ENCODE measurements at regions of chr16 and their contacts with region 1.

Region 1: GRCh38 chr16:28616636-28617035 is 6.8 kb upstream of the SULT1A1 start:
- DNase-seq: no peak
- ATAC-seq: no peak
- H3K4me3 ChIP-seq: no peak overlapping the region
- H3K27ac ChIP-seq: no peak overlapping the region
- H3K4me1 ChIP-seq: no peaks in the 10 kb centered on the region
- CTCF ChIP-seq: no peak
- EP300 ChIP-seq: no peak
- POLR2A ChIP-seq: no peak
- RAD21 ChIP-seq: no peak

Region 2: DNA sequence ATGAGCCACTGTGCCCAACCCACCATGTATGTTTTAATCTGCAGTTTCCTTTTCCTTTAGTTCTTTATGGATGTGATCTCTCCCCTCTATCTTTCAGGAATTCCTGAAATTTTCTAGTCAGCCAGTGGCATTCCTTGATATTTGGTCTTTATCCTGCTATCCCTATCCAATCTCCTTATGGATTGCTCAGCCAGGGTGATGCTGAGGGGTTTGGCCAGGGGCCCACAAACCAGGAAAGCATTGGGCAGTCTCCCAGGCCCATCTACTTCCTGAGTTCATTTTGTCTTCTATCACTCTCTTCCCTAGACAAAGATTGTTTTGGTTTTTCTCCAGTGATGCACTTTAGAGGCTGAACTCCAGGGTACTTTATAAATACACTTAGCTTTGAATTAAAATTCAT is 950.8 kb before region 1 on chr16:
- CTCF ChIA-PET with region 1: no interaction called
- POLR2A ChIA-PET with region 1: no interaction called
- DNase-seq: no peak
- ATAC-seq: no peak
- H3K4me3 ChIP-seq: no peak overlapping the region
- H3K27ac ChIP-seq: no peak overlapping the region
- H3K4me1 ChIP-seq: no peaks in the 10 kb centered on the region
- CTCF ChIP-seq: no peak
- EP300 ChIP-seq: no peak
- POLR2A ChIP-seq: no peak
- RAD21 ChIP-seq: no peak

Region 3: GRCh38 chr16:28250999-28251398 is 365.6 kb before region 1 on chr16:
- CTCF ChIA-PET with region 1: no interaction called
- POLR2A ChIA-PET with region 1: no interaction called
- DNase-seq: no peak
- ATAC-seq: no peak
- H3K4me3 ChIP-seq: no peak overlapping the region
- H3K27ac ChIP-seq: no peak overlapping the region
- H3K4me1 ChIP-seq: no peaks in the 10 kb centered on the region
- CTCF ChIP-seq: no peak
- EP300 ChIP-seq: no peak
- POLR2A ChIP-seq: no peak
- RAD21 ChIP-seq: no peak

Region 4: GRCh38 chr16:28317040-28317880 is 299.4 kb before region 1 on chr16:
- CTCF ChIA-PET with region 1: interaction called, 12 read pairs
- POLR2A ChIA-PET with region 1: no interaction called
- DNase-seq: peak; percentile 57 to 62
- ATAC-seq: peak; percentile 48 to 80; a peak in 5 of 6 replicates
- H3K4me3 ChIP-seq: no peak overlapping the region
- H3K27ac ChIP-seq: no peak overlapping the region
- H3K4me1 ChIP-seq: no peaks in the 10 kb centered on the region
- CTCF ChIP-seq: peak; percentile 80
- EP300 ChIP-seq: no peak
- POLR2A ChIP-seq: no peak
- RAD21 ChIP-seq: peak; percentile 72 to 74

Region 5: GRCh38 chr16:28473714-28474265 is 142.8 kb before region 1 on chr16:
- CTCF ChIA-PET with region 1: no interaction called
- POLR2A ChIA-PET with region 1: no interaction called
- DNase-seq: no peak
- ATAC-seq: no peak
- H3K4me3 ChIP-seq: no peak overlapping the region
- H3K27ac ChIP-seq: no peak overlapping the region
- H3K4me1 ChIP-seq: no peaks in the 10 kb centered on the region
- CTCF ChIP-seq: no peak
- EP300 ChIP-seq: no peak
- POLR2A ChIP-seq: no peak
- RAD21 ChIP-seq: no peak

Region 6: GRCh38 chr16:28563218-28563617 is 53.4 kb before region 1 on chr16:
- CTCF ChIA-PET with region 1: no interaction called
- POLR2A ChIA-PET with region 1: no interaction called
- DNase-seq: no peak
- ATAC-seq: no peak
- H3K4me3 ChIP-seq: no peak overlapping the region
- H3K27ac ChIP-seq: no peak overlapping the region
- H3K4me1 ChIP-seq: 0 out of 3 replicates have a peak, but pooled peaks cover 3% of the 10 kb centered on the region
- CTCF ChIP-seq: no peak
- EP300 ChIP-seq: no peak
- POLR2A ChIP-seq: no peak
- RAD21 ChIP-seq: no peak